Mammary epithelial cell (primary cell): ENCODE measurements at regions of chr7 and their contacts with region 1.

Region 1: DNA sequence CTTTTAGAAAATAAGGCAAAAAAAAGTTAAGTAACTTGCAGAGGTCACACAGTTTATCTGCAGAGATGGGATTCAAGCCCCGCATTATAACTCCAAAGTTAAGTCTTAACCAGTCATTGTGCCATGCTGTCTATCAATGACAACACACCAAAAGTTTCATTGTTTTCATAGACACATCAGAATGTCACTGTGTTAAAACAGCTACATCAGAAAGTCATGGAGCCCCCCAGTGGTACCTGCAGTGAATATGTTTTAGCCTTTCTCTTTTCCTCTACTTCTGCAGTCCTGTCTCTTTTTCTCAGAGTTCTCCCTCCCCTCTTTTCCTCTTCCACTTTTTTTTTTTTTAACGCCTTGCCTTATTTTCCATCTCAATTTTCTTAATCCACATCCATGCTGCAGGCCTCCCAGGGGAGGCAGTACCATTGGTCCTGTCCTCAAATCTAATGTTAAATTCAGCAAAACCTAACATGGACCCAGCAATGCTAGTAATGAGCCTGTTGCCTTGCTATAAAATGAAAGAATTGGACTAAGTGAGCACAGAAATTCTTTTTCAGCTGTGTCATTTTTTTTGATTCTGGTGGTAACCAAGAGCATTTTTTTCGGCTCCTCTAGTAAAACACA is 3.8 kb upstream of the NRCAM start:
- DNase-seq: peak; percentile 22
- H3K4me3 ChIP-seq: no peak overlapping the region
- H3K27ac ChIP-seq: no peak overlapping the region
- H3K4me1 ChIP-seq: peaks cover 2% of the 10 kb centered on the region
- H3K27me3 ChIP-seq: no peaks in the 10 kb centered on the region
- CTCF ChIP-seq: peak; percentile 61 to 67

Region 2: DNA sequence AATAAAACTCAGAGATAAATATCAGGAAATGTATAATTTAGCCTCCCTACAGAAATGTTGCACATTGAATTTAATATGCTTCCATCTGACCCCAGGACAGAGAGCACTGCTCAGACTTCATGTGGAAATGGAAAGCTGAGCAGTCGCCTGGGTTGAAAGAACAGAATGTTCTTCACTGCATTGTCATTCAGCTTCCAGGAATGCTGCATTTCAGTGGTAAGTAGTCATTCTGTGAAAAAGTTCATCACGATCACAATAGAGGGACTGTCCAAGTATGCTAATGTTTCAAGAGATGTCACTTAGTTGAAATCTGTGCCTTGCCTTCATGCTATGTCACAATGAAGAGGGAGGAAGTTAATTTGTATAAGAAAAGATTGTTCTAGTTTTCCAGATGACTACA is 151.1 kb before region 1 on chr7:
- CTCF ChIA-PET with region 1: no interaction called
- dilution Hi-C with region 1: no loop called
- in situ Hi-C with region 1: no loop called
- intact Hi-C with region 1: loop called (anchors 5 kb)
- DNase-seq: peak; percentile 80
- H3K4me3 ChIP-seq: no peak overlapping the region
- H3K27ac ChIP-seq: peak overlapping the region; percentile 99
- H3K4me1 ChIP-seq: peaks cover 56% of the 10 kb centered on the region
- H3K27me3 ChIP-seq: no peaks in the 10 kb centered on the region
- CTCF ChIP-seq: no peak